ENCODE measurements at regions of chr11 and their contacts with region 1.

Region 1: GRCh38 chr11:111512296-111513239 is at the start of gene BTG4:
- DNase-seq: no peak
- H3K4me3 Mint-ChIP-seq: peak within 1 kb of the TSS; percentile 80
- H3K27ac Mint-ChIP-seq: no peak within 1 kb of the TSS
- H3K4me1 Mint-ChIP-seq: peaks cover 11% of the 10 kb centered on the region
- H3K27me3 Mint-ChIP-seq: peaks cover 32% of the 10 kb centered on the region
- total RNA-seq, gene BTG4: not detected in 2 replicates

Region 2: DNA sequence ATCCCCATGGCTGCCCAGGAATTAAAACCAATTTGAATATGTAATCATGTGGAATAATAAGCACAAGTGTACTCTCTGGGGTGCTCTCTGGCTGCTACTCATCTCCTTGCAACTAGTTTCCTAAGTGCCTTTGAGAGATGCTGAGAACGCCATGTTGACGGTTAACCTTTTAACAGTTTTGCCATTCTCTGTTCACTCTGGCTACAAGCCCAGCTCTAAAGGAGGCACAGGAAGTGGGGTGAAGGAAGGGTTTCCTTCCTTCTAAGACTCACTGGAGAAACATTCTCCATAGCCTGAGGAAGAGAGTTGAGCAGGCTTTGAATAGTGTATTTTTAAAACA is 1541.4 kb before region 1 on chr11:
- intact Hi-C with region 1: loop called (anchors 10 kb)
- DNase-seq: no peak
- H3K4me3 Mint-ChIP-seq: peak overlapping the region; percentile 57
- H3K27ac Mint-ChIP-seq: peak overlapping the region; percentile 82
- H3K4me1 Mint-ChIP-seq: peaks cover 45% of the 10 kb centered on the region
- H3K27me3 Mint-ChIP-seq: peaks cover 7% of the 10 kb centered on the region

Region 3: GRCh38 chr11:111299101-111300026 is 213.2 kb before region 1 on chr11:
- intact Hi-C with region 1: no loop called
- DNase-seq: no peak
- H3K4me3 Mint-ChIP-seq: no peak overlapping the region
- H3K27ac Mint-ChIP-seq: no peak overlapping the region
- H3K4me1 Mint-ChIP-seq: no peaks in the 10 kb centered on the region
- H3K27me3 Mint-ChIP-seq: peaks cover 50% of the 10 kb centered on the region

Region 4: DNA sequence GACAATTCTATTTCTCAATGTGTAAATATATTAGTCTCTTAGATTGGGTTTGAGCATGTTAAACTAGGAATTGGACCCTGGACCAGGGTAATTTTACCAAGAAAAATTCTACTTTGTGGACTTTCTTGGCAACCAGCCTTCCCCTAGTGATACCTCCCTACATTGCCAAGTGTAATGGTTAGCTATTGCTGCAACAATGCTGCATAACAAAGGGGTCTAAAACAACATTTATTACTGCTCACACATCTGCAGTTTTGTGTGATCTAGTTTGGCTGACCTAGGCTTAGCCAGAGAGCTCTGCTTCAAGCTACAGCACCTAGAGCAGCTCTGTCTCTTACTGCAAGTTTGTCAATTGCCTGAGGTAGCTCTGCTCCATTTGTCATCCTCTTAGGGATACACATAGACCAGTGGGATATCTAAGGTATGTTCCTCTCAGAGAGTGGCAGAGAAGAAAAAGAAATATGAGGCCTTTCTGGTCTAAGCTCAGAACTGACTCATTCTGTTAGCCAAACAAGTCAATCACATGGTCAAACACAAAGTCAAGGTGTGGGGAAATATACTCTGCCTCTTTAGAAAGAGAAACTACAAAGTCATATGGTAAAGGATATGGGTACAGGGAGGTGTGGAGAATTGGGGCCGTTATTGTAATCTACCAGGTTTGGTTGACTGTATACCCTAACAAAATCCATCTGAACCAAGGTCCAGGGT is 26.0 kb after region 1 on chr11:
- intact Hi-C with region 1: loop called (anchors 1 kb)
- DNase-seq: no peak
- H3K4me3 Mint-ChIP-seq: peak overlapping the region; percentile 38
- H3K27ac Mint-ChIP-seq: peak overlapping the region; percentile 84
- H3K4me1 Mint-ChIP-seq: peaks cover 48% of the 10 kb centered on the region
- H3K27me3 Mint-ChIP-seq: peaks cover 50% of the 10 kb centered on the region

Region 5: GRCh38 chr11:111718436-111718835 is 205.9 kb after region 1 on chr11:
- intact Hi-C with region 1: no loop called
- DNase-seq: no peak
- H3K4me3 Mint-ChIP-seq: no peak overlapping the region
- H3K27ac Mint-ChIP-seq: no peak overlapping the region
- H3K4me1 Mint-ChIP-seq: no peaks in the 10 kb centered on the region
- H3K27me3 Mint-ChIP-seq: no peaks in the 10 kb centered on the region